ENCODE measurements at regions of chr2 and their contacts with region 1.

Region 1: GRCh38 chr2:100580367-100581276 is 17.8 kb downstream of the PDCL3 start:
- DNase-seq: peak; percentile 26 to 84 (median 56)
- ATAC-seq: peak; percentile 80
- H3K4me3 ChIP-seq: peak overlapping the region; percentile 21
- H3K4me3 Mint-ChIP-seq: peak overlapping the region; percentile 2
- H3K27ac ChIP-seq: peak overlapping the region; percentile 82 to 83
- H3K27ac Mint-ChIP-seq: peak overlapping the region; percentile 90
- H3K4me1 ChIP-seq: peaks cover 40% of the 10 kb centered on the region
- H3K4me1 Mint-ChIP-seq: peaks cover 45% of the 10 kb centered on the region
- H3K27me3 ChIP-seq: no peaks in the 10 kb centered on the region
- H3K27me3 Mint-ChIP-seq: no peaks in the 10 kb centered on the region
- CTCF ChIP-seq: no peak

Region 2: DNA sequence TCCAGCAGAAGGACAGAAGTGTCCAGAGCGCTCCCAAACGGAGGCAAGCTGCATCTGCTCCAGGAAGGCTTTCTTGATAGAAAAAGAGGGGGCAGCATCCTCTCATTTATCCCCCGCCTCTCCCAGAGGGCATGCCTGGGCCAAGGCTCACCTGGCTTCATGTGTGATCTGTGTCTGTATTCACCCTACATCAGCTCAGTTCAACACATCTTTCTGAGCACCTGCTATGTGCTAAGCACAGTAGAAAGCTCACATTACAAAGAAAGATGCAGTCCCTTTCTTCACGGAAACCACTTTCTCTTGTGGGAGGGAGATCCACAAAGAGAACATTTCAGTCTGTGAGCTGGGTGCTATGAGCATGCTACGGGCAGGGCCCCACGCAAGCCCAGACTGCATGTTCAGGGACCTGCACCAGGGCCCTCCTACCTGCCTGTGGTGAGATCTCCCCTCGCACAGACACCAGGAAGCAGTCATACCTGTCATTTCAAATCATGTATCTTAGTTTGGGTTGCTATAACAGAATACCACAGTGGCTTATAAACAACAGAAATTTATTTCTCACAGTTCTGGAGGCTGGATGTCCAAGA is 72.9 kb after region 1 on chr2:
- CTCF ChIA-PET with region 1: interaction called, 3 read pairs
- POLR2A ChIA-PET with region 1: interaction called, 3 read pairs
- intact Hi-C with region 1: loop called in 1 of 2 experiments (anchors 5 kb)
- DNase-seq: peak in 13 of 14 experiments; percentile 18 to 81 (median 31)
- ATAC-seq: peak; percentile 94
- H3K4me3 ChIP-seq: no peak overlapping the region
- H3K4me3 Mint-ChIP-seq: peak overlapping the region; percentile 65
- H3K27ac ChIP-seq: no peak overlapping the region
- H3K27ac Mint-ChIP-seq: peak overlapping the region; percentile 93
- H3K4me1 ChIP-seq: peaks cover 28% of the 10 kb centered on the region
- H3K4me1 Mint-ChIP-seq: peaks cover 57% of the 10 kb centered on the region
- H3K27me3 ChIP-seq: no peaks in the 10 kb centered on the region
- H3K27me3 Mint-ChIP-seq: no peaks in the 10 kb centered on the region
- CTCF ChIP-seq: no peak

Region 3: DNA sequence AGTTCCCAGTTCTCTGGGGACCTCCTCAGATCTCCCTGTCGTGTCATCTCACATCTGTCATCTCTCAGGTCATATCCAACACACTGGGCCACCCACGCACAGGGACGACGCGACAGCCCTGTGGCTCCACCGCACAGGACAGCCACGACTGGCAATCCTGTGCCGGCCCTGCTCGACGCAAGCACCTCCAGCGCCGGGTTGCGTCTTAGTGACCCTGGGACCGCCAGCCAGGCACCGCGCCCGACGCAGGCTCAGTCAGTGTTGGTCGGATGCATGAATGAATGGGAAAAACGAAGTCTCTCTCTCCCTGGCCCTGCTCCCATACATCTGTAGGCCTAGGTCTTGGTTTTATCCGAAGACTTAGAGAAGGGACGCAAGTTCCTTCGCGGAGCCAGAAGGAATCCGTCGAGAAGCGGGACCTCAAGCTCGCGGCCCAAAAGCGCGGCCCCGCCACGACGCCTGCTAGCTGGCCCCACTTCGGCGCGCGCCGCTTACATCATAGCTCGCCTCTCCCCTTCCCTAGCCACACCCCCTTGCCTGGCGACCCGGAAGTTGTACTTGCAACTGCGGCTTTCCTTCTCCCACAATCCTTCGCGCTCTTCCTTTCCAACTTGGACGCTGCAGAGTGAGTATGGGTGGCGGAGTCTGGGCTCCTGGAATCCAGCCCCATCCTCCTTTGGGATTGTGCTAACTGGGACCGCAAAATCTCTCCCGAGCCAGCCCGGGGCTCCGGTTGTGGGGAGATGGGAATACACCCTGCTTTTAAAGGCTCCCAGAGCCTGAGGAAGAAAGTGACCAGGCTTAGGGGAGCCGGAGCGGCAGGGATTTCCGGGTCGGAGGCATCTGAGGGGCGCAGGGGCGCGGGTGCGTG is 421.3 kb after region 1 on chr2 and contains the start of gene RPL31:
- CTCF ChIA-PET with region 1: interaction called, 6 read pairs
- POLR2A ChIA-PET with region 1: interaction called, 22 read pairs
- intact Hi-C with region 1: no loop called
- DNase-seq: peak; percentile 90 to 98 (median 94)
- ATAC-seq: peak; percentile 95
- H3K4me3 ChIP-seq: peak within 1 kb of the TSS; percentile 82
- H3K4me3 Mint-ChIP-seq: peak within 1 kb of the TSS; percentile 90
- H3K27ac ChIP-seq: peak within 1 kb of the TSS; percentile 80 to 83
- H3K27ac Mint-ChIP-seq: peak within 1 kb of the TSS; percentile 91
- H3K4me1 ChIP-seq: peaks cover 36% of the 10 kb centered on the region
- H3K4me1 Mint-ChIP-seq: peaks cover 52% of the 10 kb centered on the region
- H3K27me3 ChIP-seq: no peaks in the 10 kb centered on the region
- H3K27me3 Mint-ChIP-seq: no peaks in the 10 kb centered on the region
- CTCF ChIP-seq: no peak
- total RNA-seq, gene RPL31: 2,901 to 2,913 TPM